Activated CD8-positive, alpha-beta T cell treated with anti-CD3 and anti-CD28 coated beads for 36 hours (primary cell): ENCODE measurements at regions of chr14 and their contacts with region 1.

Region 1: DNA sequence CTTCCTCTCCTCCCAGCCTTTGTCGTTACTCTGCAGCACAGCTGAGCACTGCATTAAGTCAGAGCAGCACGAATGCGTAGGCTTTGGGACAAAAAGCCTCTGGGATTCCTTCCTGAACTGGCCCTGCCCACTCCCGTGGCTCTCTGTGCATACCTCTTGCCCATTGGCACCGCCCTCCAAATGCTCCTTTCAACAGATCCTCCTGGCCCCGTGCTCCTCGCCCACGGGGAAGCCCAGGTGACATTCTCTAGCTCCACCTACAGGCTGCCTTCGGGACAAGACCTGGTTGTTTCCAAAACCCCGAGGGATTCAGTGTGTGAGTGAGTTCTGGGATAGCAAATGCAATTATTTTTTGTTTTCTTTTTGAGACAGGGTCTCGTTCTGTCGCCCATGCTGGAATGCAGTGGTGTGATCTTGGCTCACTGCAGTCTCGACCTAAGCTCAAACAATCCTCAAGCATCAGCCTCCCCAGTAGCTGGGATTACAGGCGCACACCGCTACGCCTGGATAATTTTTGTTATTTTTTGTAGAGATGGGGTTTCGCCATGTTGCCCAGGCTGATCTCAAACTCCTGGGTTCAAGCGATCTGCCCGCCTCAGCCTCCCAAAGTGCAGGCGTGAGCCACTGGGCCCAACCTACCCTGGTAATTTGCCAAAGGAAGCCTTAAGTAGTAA is 17.9 kb upstream of the TDRD9 start:
- DNase-seq: peak; percentile 84
- ATAC-seq: peak; percentile 90
- H3K4me3 Mint-ChIP-seq: peak overlapping the region; percentile 22
- H3K27ac Mint-ChIP-seq: peak overlapping the region; percentile 71
- H3K4me1 Mint-ChIP-seq: peaks cover 24% of the 10 kb centered on the region
- H3K27me3 Mint-ChIP-seq: no peaks in the 10 kb centered on the region
- CTCF ChIP-seq: peak; percentile 83

Region 2: DNA sequence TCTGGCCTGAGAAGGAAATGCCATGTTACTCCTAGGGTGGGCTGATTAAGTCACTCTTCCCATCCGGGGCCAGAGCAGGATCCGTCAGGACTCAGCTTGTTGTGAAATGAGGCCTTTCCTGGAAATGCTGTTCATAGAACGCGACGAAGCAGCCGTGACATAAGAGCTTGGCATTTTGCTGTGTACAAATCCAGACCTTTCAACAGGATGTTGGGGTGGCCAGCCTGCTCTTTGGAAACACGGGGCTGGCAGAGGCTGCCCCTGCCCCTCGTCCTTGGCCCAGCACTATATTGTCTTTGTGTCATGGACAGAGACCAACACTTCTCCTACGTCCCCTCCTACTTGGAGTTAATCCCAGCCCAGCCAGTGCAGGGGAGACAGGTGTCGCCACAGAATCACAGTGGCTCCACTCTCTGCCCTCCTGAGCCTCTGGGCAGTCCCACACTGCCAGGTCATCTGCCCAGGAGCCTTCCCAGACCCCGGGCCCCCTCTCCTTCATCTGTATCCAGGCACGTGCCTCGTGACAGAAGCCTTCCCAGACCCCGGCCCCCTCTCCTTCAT is 595.0 kb before region 1 on chr14:
- CTCF ChIA-PET with region 1: no interaction called
- POLR2A ChIA-PET with region 1: no interaction called
- intact Hi-C with region 1: no loop called
- DNase-seq: no peak
- ATAC-seq: no peak
- H3K4me3 Mint-ChIP-seq: no peak overlapping the region
- H3K27ac Mint-ChIP-seq: no peak overlapping the region
- H3K4me1 Mint-ChIP-seq: no peaks in the 10 kb centered on the region
- H3K27me3 Mint-ChIP-seq: peaks cover 8% of the 10 kb centered on the region
- CTCF ChIP-seq: no peak

Region 3: DNA sequence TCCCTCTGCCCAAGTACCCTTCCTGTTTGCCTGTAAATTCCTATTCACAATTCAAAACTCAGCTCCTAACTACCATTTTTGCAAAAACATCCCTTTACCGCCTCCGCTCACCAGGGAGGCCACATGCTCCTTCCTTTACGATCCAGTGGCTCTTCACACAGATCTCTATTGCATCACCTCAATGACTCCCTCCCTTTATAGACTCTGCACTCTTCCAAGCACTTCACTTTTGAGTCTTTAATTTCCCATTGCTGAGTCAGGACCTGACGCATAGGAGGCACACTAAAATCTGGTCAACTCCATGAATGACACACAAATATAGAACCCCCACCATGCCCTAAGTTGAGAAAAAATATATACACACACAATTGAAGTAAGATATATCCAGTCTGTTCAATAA is 108.9 kb before region 1 on chr14:
- CTCF ChIA-PET with region 1: interaction called, 26 read pairs
- POLR2A ChIA-PET with region 1: no interaction called
- intact Hi-C with region 1: no loop called
- DNase-seq: no peak
- ATAC-seq: no peak
- H3K4me3 Mint-ChIP-seq: no peak overlapping the region
- H3K27ac Mint-ChIP-seq: no peak overlapping the region
- H3K4me1 Mint-ChIP-seq: peaks cover under 1% of the 10 kb centered on the region
- H3K27me3 Mint-ChIP-seq: no peaks in the 10 kb centered on the region
- CTCF ChIP-seq: no peak

Region 4: DNA sequence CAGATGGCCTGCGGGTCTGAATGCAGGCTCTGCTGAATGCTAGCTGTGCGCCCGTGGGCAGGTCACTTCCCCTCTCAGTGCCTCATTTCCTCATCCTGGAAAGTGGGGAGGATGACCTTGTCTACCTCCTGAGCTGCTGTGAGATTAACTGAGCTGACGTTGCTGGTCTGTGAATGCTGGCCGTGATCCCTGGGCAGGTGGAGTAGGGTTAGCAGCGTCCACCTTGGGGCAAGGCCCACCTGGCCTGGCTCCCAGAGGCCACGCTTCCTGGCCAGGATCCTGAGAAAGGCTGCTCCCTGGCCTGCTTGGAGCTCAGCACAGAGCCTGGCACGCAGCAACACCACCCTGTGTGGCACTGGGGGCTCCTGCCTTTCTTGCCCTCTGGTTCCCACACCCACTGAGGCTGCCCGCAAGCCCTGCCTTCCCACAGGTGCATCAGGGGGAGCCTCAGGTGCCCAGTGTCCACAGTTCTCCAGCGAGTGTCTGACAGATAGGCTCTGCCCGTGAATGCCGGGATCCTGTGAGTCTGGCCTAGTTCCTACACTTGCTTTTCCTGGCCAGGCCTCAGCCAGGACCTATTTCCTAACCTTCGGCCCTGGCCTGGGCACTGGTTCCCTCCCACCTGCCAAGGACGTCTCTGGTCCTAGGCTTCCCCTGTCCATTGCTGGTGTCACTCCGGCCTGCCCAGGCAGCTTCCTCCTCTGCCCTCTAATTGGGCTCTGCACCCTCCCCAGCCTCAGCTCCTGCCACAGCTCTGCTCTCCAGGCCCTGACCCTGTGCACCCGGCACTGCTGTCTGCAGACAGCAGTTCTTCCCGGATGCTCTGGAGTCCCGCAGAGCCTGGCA is 19.4 kb before region 1 on chr14:
- CTCF ChIA-PET with region 1: no interaction called
- POLR2A ChIA-PET with region 1: no interaction called
- intact Hi-C with region 1: no loop called
- DNase-seq: no peak
- ATAC-seq: no peak
- H3K4me3 Mint-ChIP-seq: no peak overlapping the region
- H3K27ac Mint-ChIP-seq: no peak overlapping the region
- H3K4me1 Mint-ChIP-seq: no peaks in the 10 kb centered on the region
- H3K27me3 Mint-ChIP-seq: no peaks in the 10 kb centered on the region
- CTCF ChIP-seq: no peak

Region 5: DNA sequence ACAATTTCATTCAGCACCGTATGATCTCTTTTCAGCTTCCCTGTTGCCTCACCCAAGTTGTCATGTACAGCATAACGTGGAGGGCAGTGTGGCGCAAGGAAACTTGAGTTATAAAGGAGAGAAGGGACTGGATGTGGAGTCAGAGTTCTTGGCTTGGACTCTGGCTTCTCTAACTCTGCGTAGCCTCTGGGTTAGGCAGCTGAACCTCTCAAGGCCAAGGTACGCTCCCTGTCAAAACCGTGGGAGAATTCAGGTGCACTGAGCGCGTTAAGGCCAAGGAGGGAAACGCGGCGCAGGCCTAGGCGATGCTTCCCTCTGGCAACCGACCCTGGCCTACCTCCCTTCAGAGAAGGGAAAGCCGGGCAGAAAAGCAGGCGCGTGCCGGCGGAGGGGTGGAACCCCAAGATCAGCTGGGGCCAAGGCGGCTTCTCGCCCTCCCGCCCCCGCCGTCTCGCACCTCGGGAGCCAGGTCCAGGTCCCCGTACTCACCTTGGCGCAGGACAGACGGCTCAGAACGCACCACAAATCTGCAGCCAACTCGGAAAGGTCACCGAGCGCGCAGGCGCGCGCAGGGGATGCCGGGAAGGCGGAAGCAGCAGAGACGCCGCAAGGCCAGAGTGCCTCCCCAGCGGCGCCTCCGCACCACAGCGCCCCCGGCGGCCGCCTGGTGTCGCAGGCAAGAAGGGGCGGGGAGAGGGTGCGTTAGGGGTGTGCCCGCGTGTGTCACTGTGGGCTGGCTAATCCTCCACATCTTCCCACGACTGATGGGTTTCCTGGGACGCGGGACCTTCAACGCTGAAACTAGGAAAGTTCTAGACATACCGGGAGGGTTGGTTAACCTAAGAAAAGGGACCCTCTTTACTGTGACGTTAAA is 10.8 kb after region 1 on chr14:
- CTCF ChIA-PET with region 1: interaction called, 19 read pairs
- POLR2A ChIA-PET with region 1: interaction called, 4 read pairs
- intact Hi-C with region 1: no loop called
- DNase-seq: peak; percentile 92
- ATAC-seq: peak; percentile 100
- H3K4me3 Mint-ChIP-seq: peak overlapping the region; percentile 85
- H3K27ac Mint-ChIP-seq: peak overlapping the region; percentile 78
- H3K4me1 Mint-ChIP-seq: peaks cover 15% of the 10 kb centered on the region
- H3K27me3 Mint-ChIP-seq: peaks cover 5% of the 10 kb centered on the region
- CTCF ChIP-seq: peak; percentile 93

Region 6: DNA sequence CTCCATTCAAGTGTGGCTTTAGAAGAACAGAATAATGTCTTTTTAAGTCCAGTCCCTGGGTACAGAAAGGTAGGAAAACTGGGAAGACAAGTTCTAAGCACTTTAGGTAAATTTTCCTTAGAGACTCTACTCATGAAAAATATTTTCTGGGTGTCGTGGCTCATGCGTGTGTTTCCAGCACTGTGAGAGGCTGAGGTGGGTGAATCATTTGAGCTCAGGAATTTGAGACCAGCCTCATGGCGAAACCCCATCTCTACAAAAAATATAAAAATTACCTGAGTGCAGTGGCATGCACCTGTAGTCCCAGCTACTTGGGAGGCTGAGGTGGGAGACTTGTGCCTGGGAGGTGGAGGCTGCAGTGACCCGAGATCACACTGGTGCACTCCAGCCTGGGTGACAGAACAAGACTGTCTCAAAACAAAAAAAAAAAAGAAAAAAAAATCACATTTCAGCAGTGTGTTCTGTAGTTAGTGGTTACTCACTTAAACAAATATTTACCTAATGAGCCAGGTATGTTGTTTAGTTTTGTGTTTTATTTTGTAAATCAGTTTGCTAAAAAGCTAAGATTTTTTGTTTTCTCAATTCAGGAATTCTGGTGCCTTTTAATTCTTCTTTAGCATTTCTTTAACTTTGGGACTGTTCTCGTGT is 84.3 kb after region 1 on chr14:
- CTCF ChIA-PET with region 1: no interaction called
- POLR2A ChIA-PET with region 1: no interaction called
- intact Hi-C with region 1: no loop called
- DNase-seq: no peak
- ATAC-seq: no peak
- H3K4me3 Mint-ChIP-seq: no peak overlapping the region
- H3K27ac Mint-ChIP-seq: no peak overlapping the region
- H3K4me1 Mint-ChIP-seq: no peaks in the 10 kb centered on the region
- H3K27me3 Mint-ChIP-seq: peaks cover 9% of the 10 kb centered on the region
- CTCF ChIP-seq: no peak